Psoas muscle (tissue), 8 donors: ENCODE measurements at regions of chr19 and their contacts with region 1.

Region 1: GRCh38 chr19:46904114-46905060 is 43.6 kb downstream of the ARHGAP35 start:
- DNase-seq: peak; percentile 32 to 69
- ATAC-seq: peak; percentile 28 to 72 (median 63)
- H3K4me3 ChIP-seq: no peak overlapping the region
- H3K27ac ChIP-seq: peak overlapping the region; percentile 60
- H3K4me1 ChIP-seq: peaks cover 54% of the 10 kb centered on the region
- H3K27me3 ChIP-seq: no peaks in the 10 kb centered on the region
- CTCF ChIP-seq: no peak

Region 2: GRCh38 chr19:46866387-46867152 is 37.8 kb before region 1 on chr19:
- intact Hi-C with region 1: loop called (anchors 5 kb)
- DNase-seq: no peak
- ATAC-seq: peak; percentile 35 to 60 (median 50)
- H3K4me3 ChIP-seq: no peak overlapping the region
- H3K27ac ChIP-seq: peak overlapping the region; percentile 13
- H3K4me1 ChIP-seq: peaks cover 60% of the 10 kb centered on the region
- H3K27me3 ChIP-seq: no peaks in the 10 kb centered on the region
- CTCF ChIP-seq: no peak